Heart left ventricle (tissue), 16 donors: ENCODE measurements at regions of chr17 and their contacts with region 1.

Region 1: DNA sequence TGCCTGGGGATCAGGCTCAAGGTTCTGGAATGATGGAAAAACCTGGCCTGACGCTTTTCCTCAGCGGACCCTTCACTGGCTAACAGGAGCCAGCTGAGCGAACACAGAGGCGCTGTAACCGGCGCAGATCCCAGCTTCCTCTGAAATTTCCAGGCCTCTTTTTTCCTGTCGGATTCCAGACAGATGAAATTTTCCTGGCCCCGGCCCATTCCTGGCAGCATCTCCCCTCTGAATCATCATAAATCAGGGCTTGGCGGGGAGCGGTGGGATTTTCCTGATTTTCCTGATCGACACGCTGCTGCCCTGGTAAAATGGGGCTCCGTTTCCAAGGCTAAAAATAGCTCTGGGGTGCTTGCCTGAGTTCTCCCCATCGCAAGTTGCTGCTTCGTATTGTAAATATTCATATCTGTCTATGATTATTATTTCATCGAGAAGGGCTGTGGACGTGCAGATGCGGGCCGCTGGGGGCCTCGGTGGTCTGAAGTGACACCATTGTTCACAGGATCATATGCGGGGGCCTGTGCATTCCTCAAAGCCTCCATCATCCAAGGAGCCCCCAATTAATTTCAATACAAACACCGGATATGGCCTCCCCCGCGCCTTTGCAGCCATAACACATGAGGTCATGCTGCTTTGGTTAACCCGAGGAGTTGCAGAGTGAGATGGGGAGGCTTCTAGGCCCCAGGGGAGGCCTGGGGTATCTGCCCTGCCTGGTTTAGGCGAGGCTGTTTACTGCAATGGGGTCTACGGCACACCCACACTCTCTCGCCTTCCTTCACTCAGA is 45.8 kb upstream of the ETV4 start:
- DNase-seq: peak; percentile 86 to 89 (median 89)
- ATAC-seq: peak; percentile 82 to 88 (median 84)
- H3K4me3 ChIP-seq: peak overlapping the region in 4 of 12 donors; percentile 16 to 26 (median 22)
- H3K27ac ChIP-seq: peak overlapping the region; percentile 73 to 93 (median 81)
- H3K4me1 ChIP-seq: peaks cover 0 to 51% (median 30%) of the 10 kb centered on the region in 12 donors
- H3K27me3 ChIP-seq: no peaks in the 10 kb centered on the region
- CTCF ChIP-seq: peak in 1 of 12 donors; percentile 6
- POLR2A ChIP-seq: no peak

Region 2: GRCh38 chr17:43634591-43635125 is 42.7 kb after region 1 on chr17:
- intact Hi-C with region 1: loop called in 2 of 10 experiments (anchors 5 kb)
- DNase-seq: peak; percentile 58 to 83 (median 75)
- ATAC-seq: peak; percentile 43 to 86 (median 80)
- H3K4me3 ChIP-seq: no peak overlapping the region
- H3K27ac ChIP-seq: peak overlapping the region; percentile 11 to 80 (median 52)
- H3K4me1 ChIP-seq: peaks cover 0 to 21% (median 11%) of the 10 kb centered on the region in 12 donors
- H3K27me3 ChIP-seq: no peaks in the 10 kb centered on the region
- CTCF ChIP-seq: no peak
- POLR2A ChIP-seq: no peak

Region 3: DNA sequence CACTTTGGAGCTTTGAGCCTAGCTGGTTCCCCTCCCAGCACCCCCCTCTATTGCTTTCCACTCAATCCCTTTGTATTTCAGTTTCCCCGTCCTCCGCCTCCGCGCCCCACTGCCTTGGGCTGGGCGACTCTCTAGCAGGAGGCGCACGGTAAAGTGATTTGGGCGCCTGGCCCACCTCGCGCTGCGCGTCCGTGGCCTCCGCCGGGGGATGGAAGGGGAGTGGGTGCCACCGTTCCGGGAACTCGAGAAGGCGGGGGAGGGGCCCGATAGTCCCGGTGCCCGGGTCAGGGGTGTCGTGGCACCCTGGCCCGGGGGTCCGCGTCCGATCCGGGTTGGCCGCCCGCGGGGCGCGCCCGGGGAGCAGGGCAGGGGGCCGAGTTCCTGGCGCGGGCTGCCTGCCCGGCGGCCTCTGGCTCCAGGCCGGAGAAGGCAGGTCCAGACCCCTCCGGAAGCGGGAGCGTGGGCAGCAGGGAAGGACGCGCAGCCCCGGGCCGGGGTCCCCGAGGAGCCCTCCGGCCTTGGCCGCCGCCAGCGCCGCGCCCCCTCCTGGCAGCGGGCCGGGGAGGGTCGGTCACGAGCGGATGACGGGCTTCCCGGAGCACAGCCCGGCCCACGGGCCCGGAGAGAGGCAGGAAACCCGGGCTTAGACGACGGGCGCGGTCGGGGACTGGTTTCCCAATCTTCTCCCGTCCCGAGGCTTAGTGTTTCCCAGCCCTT is 54.0 kb after region 1 on chr17:
- intact Hi-C with region 1: loop called in 5 of 10 experiments (anchors 2 to 5 kb)
- DNase-seq: peak; percentile 87 to 91 (median 89)
- ATAC-seq: peak; percentile 35 to 88 (median 80)
- H3K4me3 ChIP-seq: peak overlapping the region in 11 of 12 donors; percentile 19 to 60 (median 52)
- H3K27ac ChIP-seq: peak overlapping the region; percentile 81 to 97 (median 90)
- H3K4me1 ChIP-seq: peaks cover 0 to 69% (median 49%) of the 10 kb centered on the region in 12 donors
- H3K27me3 ChIP-seq: peaks cover 0 to 10% (median 0%) of the 10 kb centered on the region in 9 donors
- CTCF ChIP-seq: peak in 4 of 12 donors; percentile 21 to 45 (median 36)
- POLR2A ChIP-seq: peak in 1 of 2 donors; percentile 51

Region 4: GRCh38 chr17:43661699-43662412 is 69.9 kb after region 1 on chr17 and contains the start of gene MEOX1:
- intact Hi-C with region 1: loop called in 3 of 10 experiments (anchors 5 kb)
- DNase-seq: peak; percentile 51 to 65 (median 65)
- ATAC-seq: peak; percentile 26 to 78 (median 53)
- H3K4me3 ChIP-seq: peak within 1 kb of the TSS; percentile 21 to 71 (median 54)
- H3K27ac ChIP-seq: peak within 1 kb of the TSS; percentile 49 to 94 (median 82)
- H3K4me1 ChIP-seq: peaks cover 0 to 75% (median 35%) of the 10 kb centered on the region in 12 donors
- H3K27me3 ChIP-seq: no peaks in the 10 kb centered on the region
- CTCF ChIP-seq: no peak
- POLR2A ChIP-seq: peak in 1 of 2 donors; percentile 71
- total RNA-seq, gene MEOX1: 9.7 to 24.0 (median 16.1) TPM